ENCODE measurements at regions of chr16 and their contacts with region 1.

Region 1: DNA sequence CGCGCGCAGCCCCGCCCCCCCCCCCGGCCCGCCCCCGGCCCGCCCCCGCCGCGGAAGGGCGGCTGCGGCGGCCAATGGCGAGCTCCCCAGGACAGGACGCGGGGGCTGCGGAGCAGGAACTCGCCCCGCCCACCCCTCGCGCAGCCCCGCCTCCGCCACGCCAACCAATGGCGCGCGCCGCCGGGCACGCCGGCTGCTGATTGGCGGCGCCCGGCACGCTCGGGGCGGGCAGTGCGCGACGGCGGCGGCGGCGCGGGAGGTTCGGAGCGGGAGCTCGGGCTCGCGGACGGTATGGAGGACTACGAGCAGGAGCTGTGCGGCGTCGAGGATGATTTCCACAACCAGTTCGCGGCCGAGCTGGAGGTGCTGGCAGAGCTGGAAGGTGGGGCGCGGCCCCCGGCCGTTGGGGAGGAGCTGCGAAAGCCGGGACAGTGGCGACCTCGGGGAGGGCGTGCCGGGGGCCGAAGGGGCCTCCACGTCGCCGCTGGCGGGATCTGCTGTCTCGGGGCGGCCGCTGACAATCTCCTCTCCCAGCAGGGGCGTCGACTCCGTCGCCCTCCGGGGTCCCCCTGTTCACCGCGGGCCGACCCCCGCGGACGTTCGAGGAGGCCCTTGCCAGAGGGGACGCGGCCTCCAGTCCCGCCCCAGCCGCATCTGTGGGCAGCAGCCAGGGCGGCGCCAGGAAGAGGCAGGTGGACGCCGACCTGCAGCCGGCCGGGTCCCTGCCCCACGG is at the start of gene CHTF18:
- DNase-seq: peak; percentile 100
- CTCF ChIP-seq: no peak

Region 2: GRCh38 chr16:425082-425718 is 363.4 kb before region 1 on chr16 and contains the start of gene RAB11FIP3:
- in situ Hi-C with region 1: no loop called
- DNase-seq: peak; percentile 98
- CTCF ChIP-seq: no peak

Region 3: DNA sequence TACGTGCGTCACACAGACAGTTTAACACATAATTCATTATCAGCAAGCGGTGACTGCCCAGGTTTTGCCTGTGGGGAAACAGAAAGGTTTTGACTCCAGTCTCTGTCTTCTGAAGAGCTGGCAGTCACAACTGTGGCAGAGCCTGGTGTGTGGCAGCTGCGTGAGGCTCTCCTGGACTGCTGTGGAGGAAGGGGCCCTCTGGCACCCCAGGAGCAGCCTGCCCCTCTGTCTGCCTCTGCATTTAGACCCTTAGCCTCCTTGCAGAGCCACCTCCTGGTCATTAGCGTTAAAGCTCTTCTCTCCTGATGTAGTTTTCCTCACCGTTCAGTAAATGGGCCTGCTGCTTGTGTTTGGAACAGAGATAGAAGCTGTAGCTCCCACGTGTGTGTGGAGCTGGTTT is 187.8 kb before region 1 on chr16:
- in situ Hi-C with region 1: no loop called
- DNase-seq: no peak
- CTCF ChIP-seq: peak; percentile 29

Region 4: GRCh38 chr16:636206-637080 is 152.1 kb before region 1 on chr16 and contains the start of gene METTL26:
- in situ Hi-C with region 1: no loop called
- DNase-seq: peak; percentile 99
- CTCF ChIP-seq: no peak

Region 5: DNA sequence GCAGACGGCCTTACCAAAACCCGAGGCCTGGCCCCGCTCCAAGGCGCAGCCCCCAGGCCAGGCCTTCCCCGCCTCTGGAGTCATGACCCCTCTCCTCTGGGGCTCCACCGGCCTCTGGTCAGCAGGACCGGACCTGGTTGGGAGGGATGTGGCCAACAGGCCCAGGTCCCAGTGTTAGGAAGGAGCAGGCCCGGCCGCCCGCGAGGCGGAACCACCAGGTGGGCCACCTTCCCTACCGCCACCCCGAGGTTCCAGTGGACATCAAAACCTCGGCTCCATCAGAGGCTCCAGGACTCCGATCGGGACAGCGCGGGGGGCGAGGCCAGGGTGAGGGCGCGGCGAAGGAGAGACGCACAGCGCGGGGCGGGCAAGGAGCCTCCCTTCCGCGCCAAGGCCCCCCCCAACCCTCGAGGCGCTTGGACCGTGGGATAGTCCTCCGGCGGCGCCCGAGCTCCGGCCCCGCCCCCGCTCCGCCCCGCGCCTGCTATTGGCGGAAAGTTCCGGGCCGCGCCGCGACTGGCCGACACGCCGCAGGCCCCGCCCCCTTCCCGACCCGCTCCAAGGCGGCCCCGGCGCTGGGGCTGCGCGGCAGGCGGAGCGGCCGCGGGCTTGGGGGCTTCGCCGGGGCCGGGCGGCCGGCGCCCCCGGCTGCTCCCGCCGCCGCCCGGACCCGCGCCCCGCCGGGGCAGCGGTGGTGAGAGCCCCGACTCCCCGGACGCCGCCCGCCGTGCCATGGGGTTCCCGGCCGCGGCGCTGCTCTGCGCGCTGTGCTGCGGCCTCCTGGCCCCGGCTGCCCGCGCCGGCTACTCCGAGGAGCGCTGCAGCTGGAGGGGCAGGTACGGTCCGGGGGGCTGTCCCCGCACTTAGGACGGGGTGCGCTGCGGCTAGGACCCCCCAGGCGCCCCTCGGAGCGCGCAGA is 73.7 kb before region 1 on chr16 and contains the start of gene METRN:
- in situ Hi-C with region 1: loop called (anchors 5 kb)
- DNase-seq: peak; percentile 98
- CTCF ChIP-seq: no peak